Uterus (tissue), 4 donors: ENCODE measurements at regions of chr12 and their contacts with region 1.

Region 1: DNA sequence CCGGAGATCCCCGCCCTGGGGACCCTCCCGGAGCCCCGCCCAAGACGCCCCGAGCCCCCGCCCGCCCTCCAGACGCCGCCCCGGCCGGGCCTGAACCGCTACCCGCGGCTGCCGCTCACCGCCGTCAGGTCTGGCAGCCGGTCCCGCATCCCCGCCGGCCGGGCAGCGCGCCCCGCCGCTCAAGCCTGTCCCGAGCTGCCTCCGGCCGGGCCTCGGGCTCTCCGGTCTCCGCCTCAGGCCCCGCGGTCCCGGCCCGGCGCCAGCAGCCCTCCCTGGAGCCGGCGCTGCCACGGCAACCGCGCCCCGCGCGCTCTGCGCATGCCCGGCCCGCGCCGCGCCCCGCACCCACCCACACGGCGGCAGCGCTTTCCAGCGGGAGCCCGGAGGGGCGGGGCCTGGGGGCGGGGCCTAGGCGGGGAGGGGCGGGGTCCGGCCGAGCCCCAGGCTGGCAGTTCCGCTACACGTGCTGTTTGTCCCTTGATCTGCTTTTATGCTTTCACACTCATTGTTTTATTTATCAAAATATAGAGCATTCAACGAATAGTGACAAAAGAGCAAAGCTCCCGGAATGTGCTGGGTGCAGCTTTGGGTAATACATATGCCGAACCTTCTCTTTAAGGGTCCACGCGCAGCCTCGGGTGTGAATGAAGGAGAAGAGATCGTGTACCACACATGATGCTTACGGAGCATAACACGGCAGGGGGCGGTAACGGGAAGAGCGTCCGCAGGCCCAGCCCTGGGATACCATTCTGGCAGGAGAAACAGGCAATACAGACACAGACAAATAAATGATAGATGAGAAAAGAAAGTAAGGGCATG is at the start of gene STX2:
- DNase-seq: peak; percentile 84 to 92
- H3K4me3 ChIP-seq: peak within 1 kb of the TSS; percentile 75 to 84
- H3K27ac ChIP-seq: peak within 1 kb of the TSS; percentile 66 to 79
- H3K4me1 ChIP-seq: peaks cover 0 to 6% of the 10 kb centered on the region in 2 donors
- H3K27me3 ChIP-seq: no peaks in the 10 kb centered on the region
- CTCF ChIP-seq: peak in 3 of 4 experiments; percentile 20 to 40 (median 31)
- POLR2A ChIP-seq: peak in 1 of 2 donors; percentile 56
- total RNA-seq, gene STX2: 33.5 to 44.6 (median 35.4) TPM

Region 2: GRCh38 chr12:130240831-130241590 is 598.1 kb before region 1 on chr12:
- intact Hi-C with region 1: no loop called
- DNase-seq: no peak
- H3K4me3 ChIP-seq: no peak overlapping the region
- H3K27ac ChIP-seq: no peak overlapping the region
- H3K4me1 ChIP-seq: no peaks in the 10 kb centered on the region
- H3K27me3 ChIP-seq: no peaks in the 10 kb centered on the region
- CTCF ChIP-seq: no peak
- POLR2A ChIP-seq: no peak

Region 3: GRCh38 chr12:130871286-130872178 is 32.4 kb after region 1 on chr12 and contains the start of gene RAN:
- intact Hi-C with region 1: loop called (anchors 5 kb)
- DNase-seq: peak; percentile 89 to 94
- H3K4me3 ChIP-seq: peak within 1 kb of the TSS; percentile 45 to 96
- H3K27ac ChIP-seq: peak within 1 kb of the TSS; percentile 85 to 90
- H3K4me1 ChIP-seq: peaks cover 4 to 12% of the 10 kb centered on the region in 2 donors
- H3K27me3 ChIP-seq: no peaks in the 10 kb centered on the region
- CTCF ChIP-seq: peak in 1 of 4 experiments; percentile 20
- POLR2A ChIP-seq: peak; percentile 42 to 50
- total RNA-seq, gene RAN: 64.6 to 287 (median 177) TPM